SK-N-SH (cell line): ENCODE measurements at regions of chr17 and their contacts with region 1.

Region 1: DNA sequence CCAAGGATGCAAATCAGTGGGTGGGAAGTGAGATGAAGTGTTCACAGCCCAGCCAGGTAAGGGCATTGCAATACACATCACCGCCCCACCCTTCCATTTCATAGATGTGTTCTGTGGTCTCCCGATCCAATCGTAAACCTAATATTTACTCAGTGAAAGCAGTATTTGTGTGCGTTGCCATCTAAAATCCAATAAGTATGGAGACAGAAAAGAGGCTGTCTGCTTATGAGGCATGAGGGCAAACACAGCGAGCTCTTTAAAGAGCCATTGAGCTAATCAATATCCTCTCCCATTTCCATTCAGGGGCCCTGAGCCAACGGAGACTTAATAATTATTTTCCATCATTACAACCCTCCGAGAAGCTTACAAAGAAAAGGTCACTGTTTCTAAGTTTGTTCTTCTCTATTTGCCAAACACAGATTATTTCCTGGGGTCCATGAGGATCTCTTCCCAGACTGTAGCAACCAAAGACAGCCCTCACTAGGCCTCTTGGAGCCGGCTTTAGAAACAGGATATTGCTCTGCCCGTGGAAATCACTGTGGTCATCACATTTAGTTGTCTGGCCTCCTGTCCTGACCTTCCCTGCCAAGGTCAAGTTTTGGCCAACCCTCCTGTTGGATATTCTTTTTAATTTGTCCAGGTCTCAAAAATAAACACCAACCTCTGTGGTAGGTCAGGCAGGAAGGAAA is 120.1 kb downstream of the SLC39A11 start:
- DNase-seq: no peak
- H3K4me3 ChIP-seq: no peak overlapping the region
- H3K27ac ChIP-seq: no peak overlapping the region
- H3K4me1 ChIP-seq: peaks cover 6 to 19% of the 10 kb centered on the region in 2 experiments; a peak in 3 of 4 replicates
- H3K27me3 ChIP-seq: no peaks in the 10 kb centered on the region
- CTCF ChIP-seq: no peak
- EP300 ChIP-seq: no peak
- RAD21 ChIP-seq: no peak

Region 2: DNA sequence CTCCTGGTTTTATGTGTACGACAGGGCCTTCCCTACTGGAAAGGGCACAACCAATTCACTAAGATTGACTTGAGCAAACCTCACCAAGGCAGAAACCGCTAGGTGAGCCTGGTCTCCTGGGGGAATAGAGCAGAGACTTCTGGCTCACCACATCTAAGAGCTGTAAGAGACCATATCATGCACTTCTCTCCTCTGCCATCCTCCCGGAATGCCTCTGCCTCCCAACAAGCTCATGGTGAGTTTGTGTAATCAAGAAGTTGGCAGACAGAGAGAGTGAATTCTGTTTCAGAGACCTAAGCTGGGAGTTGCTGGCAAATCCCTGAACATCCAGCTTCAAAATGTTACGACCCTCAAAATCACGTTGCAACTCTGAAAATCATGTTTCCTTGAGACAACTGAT is 34.7 kb before region 1 on chr17:
- CTCF ChIA-PET with region 1: no interaction called
- POLR2A ChIA-PET with region 1: no interaction called
- DNase-seq: no peak
- H3K4me3 ChIP-seq: no peak overlapping the region
- H3K27ac ChIP-seq: no peak overlapping the region
- H3K4me1 ChIP-seq: peaks cover 0 to 4% of the 10 kb centered on the region in 2 experiments; a peak in 2 of 4 replicates
- H3K27me3 ChIP-seq: no peaks in the 10 kb centered on the region
- CTCF ChIP-seq: no peak
- EP300 ChIP-seq: no peak
- RAD21 ChIP-seq: no peak

Region 3: DNA sequence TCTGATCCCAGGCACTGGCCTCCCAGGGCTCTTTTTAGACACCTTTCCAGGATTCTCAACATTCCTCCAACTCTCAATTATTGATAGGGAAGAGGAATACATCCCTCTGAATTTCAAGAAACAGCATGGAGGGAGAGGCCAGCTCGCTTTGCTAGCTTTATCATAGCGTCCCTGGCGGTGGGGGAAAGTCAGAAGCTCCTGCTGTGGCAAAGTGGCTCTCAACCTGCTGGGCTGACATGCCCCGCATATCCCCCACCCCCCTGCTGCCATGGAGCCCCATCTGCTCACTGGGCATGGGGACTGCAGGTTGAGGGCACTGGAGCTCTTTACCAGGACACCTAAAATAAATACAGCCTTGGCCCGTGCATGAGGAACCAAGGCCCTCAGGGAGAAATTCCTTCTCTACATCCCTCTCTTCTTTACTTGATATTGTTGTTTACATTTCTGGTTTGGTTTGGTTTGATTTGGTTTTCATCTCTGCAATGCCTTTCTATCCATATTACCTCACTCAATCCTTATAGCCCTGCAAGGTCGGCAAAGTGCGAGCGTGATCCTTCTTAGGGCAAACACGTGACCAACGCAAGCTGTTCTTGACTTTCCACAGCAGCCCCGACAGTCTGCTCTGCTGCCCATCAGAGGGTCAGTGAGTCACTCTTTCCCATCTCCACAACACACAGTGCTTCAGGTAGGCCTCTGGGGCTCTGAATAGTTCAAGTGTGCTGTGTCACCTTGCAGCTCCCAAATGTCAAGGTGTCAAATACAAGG is 20.0 kb before region 1 on chr17:
- CTCF ChIA-PET with region 1: interaction called, 11 read pairs
- POLR2A ChIA-PET with region 1: no interaction called
- DNase-seq: no peak
- H3K4me3 ChIP-seq: no peak overlapping the region
- H3K27ac ChIP-seq: no peak overlapping the region
- H3K4me1 ChIP-seq: peaks cover 13 to 18% of the 10 kb centered on the region in 2 experiments; a peak in 3 of 4 replicates
- H3K27me3 ChIP-seq: no peaks in the 10 kb centered on the region
- CTCF ChIP-seq: no peak
- EP300 ChIP-seq: no peak
- RAD21 ChIP-seq: no peak

Region 4: GRCh38 chr17:73030501-73030921 is 58.1 kb after region 1 on chr17:
- CTCF ChIA-PET with region 1: no interaction called
- POLR2A ChIA-PET with region 1: no interaction called
- DNase-seq: no peak
- H3K4me3 ChIP-seq: no peak overlapping the region
- H3K27ac ChIP-seq: no peak overlapping the region
- H3K4me1 ChIP-seq: peaks cover 5 to 15% of the 10 kb centered on the region in 2 experiments; a peak in 1 of 4 replicates
- H3K27me3 ChIP-seq: no peaks in the 10 kb centered on the region
- CTCF ChIP-seq: no peak
- EP300 ChIP-seq: no peak
- RAD21 ChIP-seq: no peak